Activated CD4-positive, alpha-beta T cell treated with anti-CD3 and anti-CD28 coated beads, Interleukin-2, amount 10 ng/mL, durations not matched to agents 24 days and 14 days (primary cell): ENCODE measurements at regions of chr19 and their contacts with region 1.

Region 1: GRCh38 chr19:16259385-16260159 is 61.9 kb downstream of the AP1M1 start:
- DNase-seq: peak; percentile 67
- H3K4me3 Mint-ChIP-seq: no peak overlapping the region
- H3K27ac Mint-ChIP-seq: no peak overlapping the region
- H3K4me1 Mint-ChIP-seq: peaks cover 34% of the 10 kb centered on the region
- H3K27me3 Mint-ChIP-seq: peaks cover 18% of the 10 kb centered on the region

Region 2: DNA sequence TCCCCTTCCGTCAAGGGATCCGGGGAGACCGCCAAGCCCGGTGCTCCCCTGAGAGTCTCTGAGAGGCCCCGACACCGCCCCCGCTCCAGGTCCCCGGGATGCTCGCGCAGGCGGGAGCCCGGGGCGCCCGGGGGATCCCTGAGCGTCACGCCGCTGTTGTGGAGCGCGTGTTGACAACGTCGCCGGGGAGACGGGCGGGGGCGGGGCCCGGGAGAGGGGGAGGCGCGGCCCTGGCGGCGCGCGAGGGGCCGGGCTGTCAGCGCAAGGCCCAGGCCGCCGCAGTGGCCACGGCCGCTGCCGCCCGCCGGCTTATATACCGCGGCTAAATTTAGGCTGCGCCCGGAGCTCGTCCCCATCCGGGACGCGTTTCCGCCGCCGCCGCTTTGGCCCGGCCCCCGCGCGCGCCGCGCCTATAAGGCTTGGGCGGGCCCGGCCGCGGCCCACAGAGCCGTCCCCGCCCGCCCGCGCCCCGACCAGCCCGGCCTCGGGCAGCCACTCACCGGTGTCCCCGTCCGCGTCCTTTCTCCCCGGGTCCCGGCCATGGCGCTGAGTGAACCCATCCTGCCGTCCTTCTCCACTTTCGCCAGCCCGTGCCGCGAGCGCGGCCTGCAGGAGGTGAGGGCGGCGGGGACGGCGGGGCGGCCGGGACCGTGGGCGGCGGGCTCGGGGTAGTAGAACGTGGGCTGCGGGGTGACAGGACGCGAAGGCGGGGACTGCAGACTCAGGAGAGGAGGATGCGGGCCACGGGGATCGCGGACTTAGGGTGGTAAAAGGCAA is 65.0 kb after region 1 on chr19 and contains the start of gene KLF2:
- intact Hi-C with region 1: loop called (anchors 10 kb)
- DNase-seq: peak; percentile 98
- H3K4me3 Mint-ChIP-seq: peak within 1 kb of the TSS; percentile 87
- H3K27ac Mint-ChIP-seq: peak within 1 kb of the TSS; percentile 58
- H3K4me1 Mint-ChIP-seq: peaks cover 31% of the 10 kb centered on the region
- H3K27me3 Mint-ChIP-seq: peaks cover 43% of the 10 kb centered on the region
- total RNA-seq, gene KLF2: 2.2 and 3.7 TPM in 2 replicates